SK-N-SH (cell line): ENCODE measurements at regions of chr4 and their contacts with region 1.

Region 1: GRCh38 chr4:83284193-83285054 is at the start of gene COQ2:
- DNase-seq: peak; percentile 95
- H3K4me3 ChIP-seq: peak within 1 kb of the TSS; percentile 75 to 79
- H3K27ac ChIP-seq: peak within 1 kb of the TSS; percentile 77 to 93
- H3K4me1 ChIP-seq: peaks cover 0 to 7% of the 10 kb centered on the region in 2 experiments; a peak in 2 of 4 replicates
- H3K27me3 ChIP-seq: no peaks in the 10 kb centered on the region
- CTCF ChIP-seq: 0 out of 2 replicates have a peak, but pooled peaks have one; percentile 20
- EP300 ChIP-seq: no peak; a peak in 1 of 4 replicates
- RAD21 ChIP-seq: no peak
- polyA plus RNA-seq, gene COQ2: 14.8 and 15.6 TPM in 2 replicates

Region 2: DNA sequence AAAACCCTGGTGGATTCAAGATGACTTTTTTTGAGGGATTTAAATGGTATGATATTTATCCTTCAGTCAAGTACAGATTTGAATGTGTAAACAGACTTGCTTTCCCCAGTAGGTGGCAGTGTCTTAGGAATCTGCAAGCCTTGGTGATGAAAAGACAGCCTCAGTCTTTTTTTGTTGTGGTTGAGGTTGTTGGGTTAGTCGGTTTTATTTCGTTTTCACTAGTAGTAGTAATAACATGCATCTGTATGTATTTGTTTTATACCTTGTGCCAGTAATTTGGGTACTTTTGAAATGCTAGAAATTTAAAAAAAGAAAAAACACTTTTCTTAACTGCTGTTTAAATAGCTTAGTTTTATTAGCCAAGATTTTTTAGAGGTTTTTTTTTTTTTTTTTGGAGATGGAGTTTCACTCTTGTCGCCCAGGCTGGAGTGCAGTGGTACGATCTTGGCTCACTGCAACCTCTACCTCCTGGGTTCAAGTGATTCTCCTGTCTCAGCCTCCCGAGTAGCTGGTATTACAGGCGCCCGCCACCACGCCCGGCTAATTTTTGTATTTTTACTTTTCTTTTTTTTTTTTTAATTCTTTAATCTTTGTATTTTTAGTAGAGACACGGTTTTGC is 210.2 kb before region 1 on chr4:
- CTCF ChIA-PET with region 1: interaction called, 16 read pairs
- POLR2A ChIA-PET with region 1: no interaction called
- DNase-seq: peak; percentile 56
- H3K4me3 ChIP-seq: peak overlapping the region in 1 of 2 experiments; percentile 14; a peak in 1 of 4 replicates
- H3K27ac ChIP-seq: peak overlapping the region in 1 of 2 experiments; percentile 83; a peak in 2 of 4 replicates
- H3K4me1 ChIP-seq: peaks cover 0 to 6% of the 10 kb centered on the region in 2 experiments; a peak in 1 of 4 replicates
- H3K27me3 ChIP-seq: no peaks in the 10 kb centered on the region
- CTCF ChIP-seq: peak; percentile 86
- EP300 ChIP-seq: no peak
- RAD21 ChIP-seq: peak; percentile 73

Region 3: DNA sequence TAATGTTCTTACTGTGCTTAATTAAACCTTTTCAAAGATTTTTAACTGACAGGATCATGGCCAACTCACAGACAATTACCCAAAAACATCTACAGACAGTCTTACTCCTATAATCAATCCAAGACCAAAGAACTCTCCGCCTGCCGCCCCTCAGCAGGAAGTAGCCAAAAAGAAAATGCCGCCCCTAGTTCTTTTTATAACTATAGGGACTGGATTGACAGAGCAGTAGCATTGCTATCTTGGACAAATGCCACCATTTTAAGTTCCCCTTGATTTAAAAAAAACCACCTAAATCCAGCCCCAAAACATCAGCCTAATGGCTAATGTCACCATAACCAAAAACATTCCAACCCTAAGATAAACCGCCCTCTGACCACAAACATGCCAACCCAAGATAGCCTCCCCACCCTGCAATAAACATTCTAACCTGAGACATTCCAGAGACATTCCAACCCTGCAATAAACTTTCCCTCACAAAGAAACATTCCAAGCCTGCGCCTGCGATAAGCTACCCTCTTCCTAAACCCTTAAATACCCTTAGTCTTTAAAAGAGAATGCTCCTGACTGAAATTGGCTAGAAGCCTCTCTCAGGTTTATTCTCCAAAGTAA is 76.8 kb before region 1 on chr4:
- CTCF ChIA-PET with region 1: no interaction called
- POLR2A ChIA-PET with region 1: no interaction called
- DNase-seq: no peak
- H3K4me3 ChIP-seq: no peak overlapping the region
- H3K27ac ChIP-seq: peak overlapping the region in 1 of 2 experiments; percentile 55; a peak in 1 of 4 replicates
- H3K4me1 ChIP-seq: no peaks in the 10 kb centered on the region
- H3K27me3 ChIP-seq: no peaks in the 10 kb centered on the region
- CTCF ChIP-seq: no peak
- EP300 ChIP-seq: peak in 1 of 2 experiments; percentile 43; a peak in 1 of 4 replicates
- RAD21 ChIP-seq: no peak

Region 4: GRCh38 chr4:83259586-83259985 is 24.8 kb before region 1 on chr4:
- CTCF ChIA-PET with region 1: interaction called, 13 read pairs
- POLR2A ChIA-PET with region 1: no interaction called
- DNase-seq: no peak
- H3K4me3 ChIP-seq: no peak overlapping the region
- H3K27ac ChIP-seq: no peak overlapping the region
- H3K4me1 ChIP-seq: peaks cover 0 to 4% of the 10 kb centered on the region in 2 experiments; a peak in 1 of 4 replicates
- H3K27me3 ChIP-seq: no peaks in the 10 kb centered on the region
- CTCF ChIP-seq: no peak
- EP300 ChIP-seq: no peak
- RAD21 ChIP-seq: no peak

Region 5: GRCh38 chr4:83272900-83273299 is 11.5 kb before region 1 on chr4:
- CTCF ChIA-PET with region 1: interaction called, 28 read pairs
- POLR2A ChIA-PET with region 1: no interaction called
- DNase-seq: no peak
- H3K4me3 ChIP-seq: no peak overlapping the region
- H3K27ac ChIP-seq: no peak overlapping the region
- H3K4me1 ChIP-seq: peaks cover 0 to 3% of the 10 kb centered on the region in 2 experiments; a peak in 1 of 4 replicates
- H3K27me3 ChIP-seq: no peaks in the 10 kb centered on the region
- CTCF ChIP-seq: no peak
- EP300 ChIP-seq: no peak
- RAD21 ChIP-seq: no peak